Body of pancreas (tissue), 4 donors: ENCODE measurements at regions of chr11 and their contacts with region 1.

Region 1: GRCh38 chr11:65251476-65251875 is 10.3 kb upstream of the POLA2 start:
- DNase-seq: no peak
- ATAC-seq: no peak
- H3K4me3 ChIP-seq: no peak overlapping the region
- H3K27ac ChIP-seq: no peak overlapping the region
- H3K4me1 ChIP-seq: no peaks in the 10 kb centered on the region
- H3K27me3 ChIP-seq: no peaks in the 10 kb centered on the region
- CTCF ChIP-seq: no peak
- POLR2A ChIP-seq: no peak

Region 2: DNA sequence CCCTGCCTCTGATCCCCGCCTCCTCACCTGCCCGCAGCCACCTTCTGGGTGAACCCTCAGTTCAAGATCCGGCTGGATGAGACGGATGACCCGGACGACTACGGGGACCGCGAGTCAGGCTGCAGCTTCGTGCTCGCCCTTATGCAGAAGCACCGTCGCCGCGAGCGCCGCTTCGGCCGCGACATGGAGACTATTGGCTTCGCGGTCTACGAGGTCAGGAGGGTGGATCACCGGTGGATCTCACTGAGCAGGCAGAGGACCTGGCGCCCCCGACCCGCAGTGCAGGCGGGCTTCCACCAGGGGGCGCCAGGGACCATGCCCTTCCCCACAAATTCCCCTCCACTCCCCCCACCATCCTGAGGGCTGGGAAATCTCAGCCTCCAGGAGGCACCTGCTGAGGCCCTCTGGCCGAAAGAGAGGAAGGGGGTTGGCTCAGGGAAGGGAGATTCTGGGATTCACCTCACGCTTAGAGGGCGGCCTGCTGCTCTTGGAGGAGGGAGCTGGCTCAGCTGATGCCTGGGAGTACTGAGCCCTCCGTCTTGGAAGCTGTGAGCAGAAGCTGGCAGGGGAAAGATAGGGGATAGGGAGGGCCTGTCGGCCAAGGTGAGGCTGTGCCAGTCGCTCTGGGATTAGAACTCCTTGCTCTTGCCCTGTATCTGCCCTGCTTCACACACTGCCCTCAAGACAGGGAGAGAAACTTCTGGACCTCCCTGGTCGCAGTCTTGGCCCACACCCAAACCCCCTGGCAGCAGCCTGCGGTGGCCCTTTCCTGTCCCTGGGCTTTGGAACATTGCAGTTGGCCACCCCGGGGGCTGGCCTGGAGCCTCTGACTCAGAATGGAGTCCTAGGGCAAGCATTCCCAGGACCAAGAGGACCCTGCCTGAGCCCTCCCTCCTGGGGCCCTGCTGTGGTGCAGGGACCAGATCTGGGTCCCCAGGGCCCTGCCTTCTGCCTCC is 46.6 kb before region 1 on chr11:
- intact Hi-C with region 1: loop called (anchors 10 kb)
- DNase-seq: no peak
- ATAC-seq: no peak
- H3K4me3 ChIP-seq: no peak overlapping the region
- H3K27ac ChIP-seq: no peak overlapping the region
- H3K4me1 ChIP-seq: no peaks in the 10 kb centered on the region
- H3K27me3 ChIP-seq: no peaks in the 10 kb centered on the region
- CTCF ChIP-seq: peak; percentile 58 to 89 (median 73)
- POLR2A ChIP-seq: no peak

Region 3: DNA sequence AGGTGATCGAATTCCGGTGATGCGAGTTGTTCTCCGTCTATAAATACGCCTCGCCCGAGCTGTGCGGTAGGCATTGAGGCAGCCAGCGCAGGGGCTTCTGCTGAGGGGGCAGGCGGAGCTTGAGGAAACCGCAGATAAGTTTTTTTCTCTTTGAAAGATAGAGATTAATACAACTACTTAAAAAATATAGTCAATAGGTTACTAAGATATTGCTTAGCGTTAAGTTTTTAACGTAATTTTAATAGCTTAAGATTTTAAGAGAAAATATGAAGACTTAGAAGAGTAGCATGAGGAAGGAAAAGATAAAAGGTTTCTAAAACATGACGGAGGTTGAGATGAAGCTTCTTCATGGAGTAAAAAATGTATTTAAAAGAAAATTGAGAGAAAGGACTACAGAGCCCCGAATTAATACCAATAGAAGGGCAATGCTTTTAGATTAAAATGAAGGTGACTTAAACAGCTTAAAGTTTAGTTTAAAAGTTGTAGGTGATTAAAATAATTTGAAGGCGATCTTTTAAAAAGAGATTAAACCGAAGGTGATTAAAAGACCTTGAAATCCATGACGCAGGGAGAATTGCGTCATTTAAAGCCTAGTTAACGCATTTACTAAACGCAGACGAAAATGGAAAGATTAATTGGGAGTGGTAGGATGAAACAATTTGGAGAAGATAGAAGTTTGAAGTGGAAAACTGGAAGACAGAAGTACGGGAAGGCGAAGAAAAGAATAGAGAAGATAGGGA is 247.7 kb after region 1 on chr11 and contains the start of gene MALAT1:
- intact Hi-C with region 1: no loop called
- DNase-seq: peak; percentile 94 to 96 (median 96)
- ATAC-seq: peak; percentile 30
- H3K4me3 ChIP-seq: peak within 1 kb of the TSS; percentile 52 to 68
- H3K27ac ChIP-seq: peak within 1 kb of the TSS; percentile 93 to 99 (median 98)
- H3K4me1 ChIP-seq: peaks cover 30% of the 10 kb centered on the region
- H3K27me3 ChIP-seq: no peaks in the 10 kb centered on the region
- CTCF ChIP-seq: no peak
- POLR2A ChIP-seq: peak; percentile 99 to 100 (median 100)
- total RNA-seq, gene MALAT1: 10,129 to 14,092 TPM